ENCODE measurements at regions of chr9 and their contacts with region 1.

Region 1: DNA sequence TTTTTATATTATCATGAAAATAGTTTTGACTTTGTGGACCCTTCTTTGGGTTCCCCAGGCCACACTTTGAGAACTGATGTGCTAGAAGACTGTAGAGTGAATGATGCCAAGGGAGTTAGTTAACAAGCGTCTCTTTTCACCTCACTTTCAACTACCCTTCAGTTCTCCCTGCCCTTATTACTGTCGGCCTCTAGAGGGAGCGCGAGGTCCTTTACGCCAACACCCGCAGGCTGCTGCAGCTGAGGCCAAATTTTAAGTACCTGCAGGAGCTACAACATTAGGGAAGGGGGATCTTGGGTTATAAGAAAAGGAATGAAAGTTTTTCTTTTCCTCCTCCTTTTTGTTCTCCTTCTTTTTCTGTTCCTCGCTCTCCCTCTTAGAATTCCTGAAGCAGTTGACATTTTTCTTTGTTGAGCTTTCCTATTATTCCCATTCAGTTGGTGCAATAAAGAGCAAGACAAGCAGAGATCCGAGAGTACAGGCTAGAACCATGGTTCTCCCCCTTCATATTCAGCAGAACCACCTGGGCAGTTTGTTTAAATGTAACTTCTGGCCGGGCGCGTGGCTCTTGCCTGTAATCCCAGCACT is 84.0 kb downstream of the ZFAND5 start:
- DNase-seq: peak; percentile 73
- H3K4me3 Mint-ChIP-seq: no peak overlapping the region
- H3K27ac Mint-ChIP-seq: no peak overlapping the region
- H3K4me1 Mint-ChIP-seq: no peaks in the 10 kb centered on the region
- H3K27me3 Mint-ChIP-seq: no peaks in the 10 kb centered on the region
- CTCF ChIP-seq: peak; percentile 93

Region 2: GRCh38 chr9:72292256-72292682 is 11.3 kb after region 1 on chr9:
- CTCF ChIA-PET with region 1: interaction called, 51 read pairs
- POLR2A ChIA-PET with region 1: no interaction called
- intact Hi-C with region 1: no loop called
- DNase-seq: peak; percentile 48
- H3K4me3 Mint-ChIP-seq: no peak overlapping the region
- H3K27ac Mint-ChIP-seq: peak overlapping the region; percentile 75
- H3K4me1 Mint-ChIP-seq: peaks cover 22% of the 10 kb centered on the region
- H3K27me3 Mint-ChIP-seq: no peaks in the 10 kb centered on the region
- CTCF ChIP-seq: peak; percentile 58

Region 3: DNA sequence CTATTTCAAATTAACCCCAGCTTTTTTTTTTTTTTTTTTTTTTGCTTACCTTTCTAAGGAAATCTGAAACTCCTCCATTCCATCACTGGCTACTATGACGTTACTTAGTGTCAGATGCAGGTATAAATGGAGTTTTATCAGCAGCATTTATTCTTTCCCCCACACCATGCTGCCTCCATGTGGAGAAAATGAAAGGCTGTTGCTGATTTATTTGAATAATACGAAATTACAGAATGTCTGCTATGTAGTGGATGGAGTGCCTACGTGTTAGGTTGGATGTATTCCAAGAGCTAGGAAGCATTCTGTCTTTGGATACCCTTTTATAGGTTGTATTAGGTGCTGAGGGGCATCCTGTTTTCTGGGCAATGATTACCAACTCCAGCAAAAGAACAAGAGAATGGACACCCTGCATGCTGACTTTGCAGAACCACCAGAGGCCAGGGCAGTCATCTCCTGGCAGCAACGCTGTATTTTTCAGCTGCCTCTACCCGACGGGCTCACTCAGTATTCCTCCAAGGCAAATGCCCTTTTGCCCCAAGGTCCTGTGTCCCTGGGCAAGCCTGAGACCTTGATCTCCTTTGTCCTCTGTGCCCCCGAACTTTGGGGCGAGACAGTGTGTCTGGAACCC is 472.4 kb after region 1 on chr9:
- CTCF ChIA-PET with region 1: interaction called, 95 read pairs
- POLR2A ChIA-PET with region 1: no interaction called
- intact Hi-C with region 1: loop called (anchors 1 kb)
- DNase-seq: peak; percentile 32
- H3K4me3 Mint-ChIP-seq: no peak overlapping the region
- H3K27ac Mint-ChIP-seq: no peak overlapping the region
- H3K4me1 Mint-ChIP-seq: no peaks in the 10 kb centered on the region
- H3K27me3 Mint-ChIP-seq: peaks cover 53% of the 10 kb centered on the region
- CTCF ChIP-seq: peak; percentile 32

Region 4: DNA sequence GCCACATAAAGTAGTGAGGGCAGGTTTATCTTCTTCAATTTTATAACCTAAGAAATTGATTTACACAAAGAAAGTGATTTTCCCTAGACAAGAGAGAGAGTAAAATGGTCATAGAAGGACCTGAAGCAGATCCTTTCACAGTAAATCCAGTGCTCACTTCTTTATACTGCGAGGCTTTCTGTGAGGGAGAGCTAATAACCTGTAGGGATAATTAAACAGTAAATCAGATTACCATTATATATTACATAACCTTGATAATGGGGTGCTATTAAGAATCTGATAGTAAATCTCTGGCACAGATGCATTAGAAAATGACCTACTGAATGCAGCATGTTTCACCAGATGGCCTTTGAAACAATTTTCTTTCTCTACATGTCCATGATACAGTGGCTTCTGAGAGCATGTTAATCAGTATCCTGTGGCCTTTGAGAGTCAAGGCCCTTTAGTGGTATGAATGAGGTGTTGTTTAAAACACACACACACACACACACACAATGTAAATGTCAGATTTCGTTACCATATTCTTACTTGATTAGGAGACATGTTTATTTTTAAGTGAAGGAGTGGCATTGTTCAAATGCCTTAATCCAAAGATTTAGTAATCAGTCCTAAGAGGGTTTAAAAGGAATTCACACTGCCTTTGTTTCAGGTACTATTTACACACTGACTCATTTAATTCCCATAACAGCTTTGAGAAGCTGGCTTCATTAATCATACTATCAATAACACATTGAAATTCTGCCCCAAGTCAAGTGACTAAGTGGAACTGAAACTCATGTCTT is 547.1 kb after region 1 on chr9:
- CTCF ChIA-PET with region 1: interaction called, 240 read pairs
- POLR2A ChIA-PET with region 1: interaction called, 7 read pairs
- intact Hi-C with region 1: no loop called
- DNase-seq: peak; percentile 78
- H3K4me3 Mint-ChIP-seq: no peak overlapping the region
- H3K27ac Mint-ChIP-seq: peak overlapping the region; percentile 72
- H3K4me1 Mint-ChIP-seq: peaks cover 14% of the 10 kb centered on the region
- H3K27me3 Mint-ChIP-seq: peaks cover 3% of the 10 kb centered on the region
- CTCF ChIP-seq: no peak

Region 5: DNA sequence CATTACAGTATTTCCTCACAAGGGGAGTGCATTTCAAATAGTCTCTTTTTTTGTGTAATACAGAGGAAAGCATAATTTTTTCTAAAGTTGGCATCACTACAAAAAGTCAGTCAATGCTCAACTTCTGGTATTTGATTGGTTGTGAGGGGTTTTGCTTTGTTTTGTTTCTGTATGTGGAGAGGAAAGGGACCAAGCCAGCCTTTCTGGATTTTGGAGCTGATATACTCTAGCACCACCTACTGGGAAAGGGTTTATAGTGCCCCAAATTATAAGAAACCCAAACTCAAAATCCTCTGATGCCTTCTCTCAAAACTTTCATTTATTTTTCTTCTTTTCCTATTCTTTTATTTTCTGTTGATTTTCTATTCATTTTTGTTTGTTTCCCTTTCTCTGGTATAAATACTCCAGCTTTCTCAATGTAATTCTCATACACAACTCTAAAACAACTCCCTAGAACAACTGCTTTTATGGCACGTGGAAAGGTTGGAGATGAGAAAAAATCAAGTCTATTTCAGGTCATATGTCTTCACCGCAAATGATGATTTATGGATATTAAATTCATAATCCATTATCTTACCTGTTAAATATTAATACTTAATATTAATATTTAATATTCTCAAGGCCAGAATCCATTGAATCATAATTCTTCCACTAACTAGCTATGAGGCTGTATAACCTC is 801.1 kb after region 1 on chr9:
- CTCF ChIA-PET with region 1: interaction called, 14 read pairs
- POLR2A ChIA-PET with region 1: no interaction called
- intact Hi-C with region 1: no loop called
- DNase-seq: peak; percentile 53
- H3K4me3 Mint-ChIP-seq: no peak overlapping the region
- H3K27ac Mint-ChIP-seq: no peak overlapping the region
- H3K4me1 Mint-ChIP-seq: no peaks in the 10 kb centered on the region
- H3K27me3 Mint-ChIP-seq: peaks cover 71% of the 10 kb centered on the region
- CTCF ChIP-seq: peak; percentile 54

Measured in MCF 10A (cell line).